Activated T-helper 1 cell treated with anti-CD3 and anti-CD28 coated beads, Interleukin-12 subunit alpha, Interleukin-12 subunit beta, Interleukin-2, Interleukin-4 antibody, amounts not matched to agents 30 ng/mL and 10 ng/mL and 1 ng/mL, durations not matched to agents 14 hours and 24 hours and 36 hours (primary cell): ENCODE measurements at regions of chr11 and their contacts with region 1.

Region 1: GRCh38 chr11:78313181-78313795 is 104.3 kb downstream of the GAB2 start:
- DNase-seq: no peak
- H3K4me3 Mint-ChIP-seq: no peak overlapping the region
- H3K27ac Mint-ChIP-seq: no peak overlapping the region
- H3K4me1 Mint-ChIP-seq: peaks cover 81% of the 10 kb centered on the region
- H3K27me3 Mint-ChIP-seq: peaks cover 2% of the 10 kb centered on the region

Region 2: DNA sequence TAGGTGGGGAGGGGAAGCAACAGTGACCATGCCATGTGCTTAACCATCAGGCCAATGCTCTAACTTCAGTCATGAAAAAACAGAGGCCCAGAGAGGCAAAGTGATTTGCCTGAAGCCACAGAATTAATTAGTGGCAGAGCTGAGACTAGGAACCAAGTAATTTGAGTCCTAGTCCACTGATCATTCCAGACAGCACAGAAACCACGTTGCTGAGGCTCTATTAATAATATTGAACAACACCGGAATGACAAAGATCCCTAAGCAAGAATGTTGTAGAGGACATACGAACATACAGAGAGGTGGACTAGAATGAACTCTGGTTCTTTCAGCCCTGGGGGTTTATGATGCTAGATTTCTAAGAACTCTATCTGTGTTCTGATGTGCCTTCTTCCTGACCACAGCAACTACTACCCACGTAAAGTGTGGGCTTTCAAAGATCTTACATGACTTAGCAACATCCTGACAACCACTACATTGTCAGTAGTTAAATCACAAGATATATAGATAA is 12.0 kb after region 1 on chr11:
- intact Hi-C with region 1: loop called (anchors 1 kb)
- DNase-seq: peak; percentile 28
- H3K4me3 Mint-ChIP-seq: peak overlapping the region; percentile 56
- H3K27ac Mint-ChIP-seq: peak overlapping the region; percentile 86
- H3K4me1 Mint-ChIP-seq: peaks cover 78% of the 10 kb centered on the region
- H3K27me3 Mint-ChIP-seq: no peaks in the 10 kb centered on the region

Region 3: GRCh38 chr11:78344676-78345075 is 31.4 kb after region 1 on chr11:
- intact Hi-C with region 1: loop called (anchors 1 kb)
- DNase-seq: no peak
- H3K4me3 Mint-ChIP-seq: no peak overlapping the region
- H3K27ac Mint-ChIP-seq: no peak overlapping the region
- H3K4me1 Mint-ChIP-seq: peaks cover 80% of the 10 kb centered on the region
- H3K27me3 Mint-ChIP-seq: peaks cover 8% of the 10 kb centered on the region